CD4-positive, alpha-beta memory T cell (primary cell): ENCODE measurements at regions of chr5 and their contacts with region 1.

Region 1: GRCh38 chr5:171913987-171914273 is 92.5 kb downstream of the FBXW11 start:
- DNase-seq: no peak
- H3K4me3 ChIP-seq: no peak overlapping the region
- H3K4me3 Mint-ChIP-seq: peak overlapping the region in 2 of 8 donors; percentile 10 to 41
- H3K27ac ChIP-seq: no peak overlapping the region
- H3K27ac Mint-ChIP-seq: peak overlapping the region in 5 of 7 donors; percentile 2 to 88 (median 60)
- H3K4me1 ChIP-seq: peaks cover 24% of the 10 kb centered on the region
- H3K4me1 Mint-ChIP-seq: peaks cover 34 to 57% (median 41%) of the 10 kb centered on the region in 4 donors
- H3K27me3 ChIP-seq: no peaks in the 10 kb centered on the region
- H3K27me3 Mint-ChIP-seq: no peaks in the 10 kb centered on the region

Region 2: DNA sequence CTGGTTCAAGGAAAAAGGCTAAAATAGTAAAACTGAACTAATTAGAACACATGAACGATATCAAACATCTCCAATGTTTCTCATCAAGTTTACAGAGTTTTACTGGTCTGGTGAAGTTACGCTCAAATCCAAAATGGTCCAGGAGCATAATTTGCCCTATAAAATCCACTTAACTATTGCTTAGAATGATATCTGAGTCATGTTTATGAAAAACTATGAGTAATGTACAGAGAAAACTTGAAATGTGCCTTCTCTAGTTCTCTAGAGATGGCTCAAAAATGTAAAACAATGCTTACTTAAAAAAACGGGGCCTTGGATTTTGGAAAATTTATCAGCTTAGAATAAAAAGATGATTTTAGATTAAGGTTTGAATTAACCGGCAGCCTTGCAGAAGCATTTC is 15.5 kb before region 1 on chr5:
- CTCF ChIA-PET with region 1: interaction called, 11 read pairs
- POLR2A ChIA-PET with region 1: no interaction called
- intact Hi-C with region 1: no loop called
- DNase-seq: no peak
- H3K4me3 ChIP-seq: no peak overlapping the region
- H3K4me3 Mint-ChIP-seq: no peak overlapping the region
- H3K27ac ChIP-seq: no peak overlapping the region
- H3K27ac Mint-ChIP-seq: no peak overlapping the region
- H3K4me1 ChIP-seq: no peaks in the 10 kb centered on the region
- H3K4me1 Mint-ChIP-seq: peaks cover 7 to 30% (median 11%) of the 10 kb centered on the region in 4 donors
- H3K27me3 ChIP-seq: no peaks in the 10 kb centered on the region
- H3K27me3 Mint-ChIP-seq: no peaks in the 10 kb centered on the region

Region 3: GRCh38 chr5:172042181-172042580 is 128.3 kb after region 1 on chr5:
- CTCF ChIA-PET with region 1: interaction called, 63 read pairs
- POLR2A ChIA-PET with region 1: no interaction called
- intact Hi-C with region 1: no loop called
- DNase-seq: no peak
- H3K4me3 ChIP-seq: no peak overlapping the region
- H3K4me3 Mint-ChIP-seq: no peak overlapping the region
- H3K27ac ChIP-seq: no peak overlapping the region
- H3K27ac Mint-ChIP-seq: peak overlapping the region in 3 of 7 donors; percentile 62 to 84 (median 69)
- H3K4me1 ChIP-seq: no peaks in the 10 kb centered on the region
- H3K4me1 Mint-ChIP-seq: peaks cover 8 to 9% (median 8%) of the 10 kb centered on the region in 4 donors
- H3K27me3 ChIP-seq: no peaks in the 10 kb centered on the region
- H3K27me3 Mint-ChIP-seq: no peaks in the 10 kb centered on the region

Region 4: GRCh38 chr5:172059661-172060100 is 145.8 kb after region 1 on chr5:
- CTCF ChIA-PET with region 1: interaction called, 25 read pairs
- POLR2A ChIA-PET with region 1: no interaction called
- intact Hi-C with region 1: no loop called
- DNase-seq: peak in 1 of 5 donors; percentile 25
- H3K4me3 ChIP-seq: no peak overlapping the region
- H3K4me3 Mint-ChIP-seq: no peak overlapping the region
- H3K27ac ChIP-seq: no peak overlapping the region
- H3K27ac Mint-ChIP-seq: peak overlapping the region; percentile 6 to 89 (median 73)
- H3K4me1 ChIP-seq: peaks cover 11% of the 10 kb centered on the region
- H3K4me1 Mint-ChIP-seq: peaks cover 13 to 30% (median 17%) of the 10 kb centered on the region in 4 donors
- H3K27me3 ChIP-seq: no peaks in the 10 kb centered on the region
- H3K27me3 Mint-ChIP-seq: no peaks in the 10 kb centered on the region

Region 5: GRCh38 chr5:172123269-172123692 is 209.4 kb after region 1 on chr5:
- CTCF ChIA-PET with region 1: no interaction called
- POLR2A ChIA-PET with region 1: no interaction called
- intact Hi-C with region 1: no loop called
- DNase-seq: no peak
- H3K4me3 ChIP-seq: no peak overlapping the region
- H3K4me3 Mint-ChIP-seq: no peak overlapping the region
- H3K27ac ChIP-seq: no peak overlapping the region
- H3K27ac Mint-ChIP-seq: peak overlapping the region; percentile 42 to 93 (median 49)
- H3K4me1 ChIP-seq: peaks cover 48% of the 10 kb centered on the region
- H3K4me1 Mint-ChIP-seq: peaks cover 26 to 78% (median 41%) of the 10 kb centered on the region in 4 donors
- H3K27me3 ChIP-seq: no peaks in the 10 kb centered on the region
- H3K27me3 Mint-ChIP-seq: no peaks in the 10 kb centered on the region

Region 6: GRCh38 chr5:172293054-172293744 is 379.3 kb after region 1 on chr5:
- CTCF ChIA-PET with region 1: interaction called, 57 read pairs
- POLR2A ChIA-PET with region 1: no interaction called
- intact Hi-C with region 1: loop called (anchors 1 kb)
- DNase-seq: peak; percentile 64 to 73 (median 65)
- H3K4me3 ChIP-seq: no peak overlapping the region
- H3K4me3 Mint-ChIP-seq: no peak overlapping the region
- H3K27ac ChIP-seq: no peak overlapping the region
- H3K27ac Mint-ChIP-seq: peak overlapping the region in 1 of 7 donors; percentile 49
- H3K4me1 ChIP-seq: no peaks in the 10 kb centered on the region
- H3K4me1 Mint-ChIP-seq: peaks cover 0 to 4% (median 2%) of the 10 kb centered on the region in 4 donors
- H3K27me3 ChIP-seq: no peaks in the 10 kb centered on the region
- H3K27me3 Mint-ChIP-seq: peaks cover 2 to 3% of the 10 kb centered on the region in 2 donors